H1 (cell line): ENCODE measurements at regions of chr16 and their contacts with region 1.

Region 1: GRCh38 chr16:799948-800833 is at the start of gene GNG13:
- DNase-seq: peak in 1 of 2 experiments; percentile 84
- H3K4me3 ChIP-seq: peak within 1 kb of the TSS; percentile 5 to 61 (median 20); a peak in 6 of 8 replicates
- H3K27ac ChIP-seq: no peak within 1 kb of the TSS
- H3K4me1 ChIP-seq: peaks cover 0 to 17% (median 3%) of the 10 kb centered on the region in 4 experiments; a peak in 4 of 7 replicates
- H3K27me3 ChIP-seq: peaks cover 1 to 42% (median 28%) of the 10 kb centered on the region in 4 experiments; a peak in 6 of 7 replicates
- CTCF ChIP-seq: no peak
- EP300 ChIP-seq: no peak
- POLR2A ChIP-seq: no peak
- RAD21 ChIP-seq: no peak
- total RNA-seq, gene GNG13: not detected in 2 replicates

Region 2: DNA sequence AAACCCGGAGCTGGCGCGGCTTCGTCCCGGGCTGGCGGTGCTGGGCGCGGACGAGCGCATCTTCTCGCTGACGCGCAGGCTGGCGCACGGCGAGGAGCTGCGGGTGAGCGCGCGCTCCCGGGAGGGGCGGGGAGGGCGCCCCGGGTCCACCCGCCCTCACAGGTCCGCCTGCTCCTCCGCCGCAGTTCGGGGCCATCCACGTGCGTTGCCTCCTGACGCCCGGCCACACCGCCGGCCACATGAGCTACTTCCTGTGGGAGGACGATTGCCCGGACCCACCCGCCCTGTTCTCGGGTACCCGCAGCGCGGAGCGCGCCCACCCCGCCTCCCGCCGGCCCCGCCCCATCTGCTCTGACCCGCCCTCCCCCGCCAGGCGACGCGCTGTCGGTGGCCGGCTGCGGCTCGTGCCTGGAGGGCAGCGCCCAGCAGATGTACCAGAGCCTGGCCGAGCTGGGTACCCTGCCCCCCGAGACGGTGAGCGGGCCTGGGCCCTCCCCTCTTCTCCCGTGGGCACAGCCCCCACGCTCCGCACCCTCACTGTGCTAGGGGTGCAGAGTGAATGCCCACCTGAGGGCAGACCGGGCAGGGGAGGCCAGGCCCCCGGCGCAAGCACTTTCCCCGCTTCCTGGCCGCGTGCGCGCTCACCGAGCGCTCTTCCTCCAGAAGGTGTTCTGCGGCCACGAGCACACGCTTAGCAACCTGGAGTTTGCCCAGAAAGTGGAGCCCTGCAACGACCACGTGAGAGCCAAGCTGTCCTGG is 71.9 kb before region 1 on chr16:
- CTCF ChIA-PET with region 1: interaction called, 3 read pairs
- POLR2A ChIA-PET with region 1: interaction called, 14 read pairs
- DNase-seq: no peak
- H3K4me3 ChIP-seq: peak overlapping the region; percentile 24 to 83 (median 37)
- H3K27ac ChIP-seq: no peak overlapping the region; the same call in 1 of the 2 replicates
- H3K4me1 ChIP-seq: peaks cover 0 to 14% (median 8%) of the 10 kb centered on the region in 4 experiments; a peak in 5 of 7 replicates
- H3K27me3 ChIP-seq: peaks cover 0 to 16% (median 5%) of the 10 kb centered on the region in 4 experiments; a peak in 4 of 7 replicates
- CTCF ChIP-seq: no peak
- EP300 ChIP-seq: no peak
- POLR2A ChIP-seq: 0 out of 3 replicates have a peak, but pooled peaks of 1 of the 2 experiments have one; percentile 15
- RAD21 ChIP-seq: no peak

Region 3: GRCh38 chr16:782766-783403 is 17.3 kb before region 1 on chr16:
- CTCF ChIA-PET with region 1: interaction called, 24 read pairs
- POLR2A ChIA-PET with region 1: interaction called, 20 read pairs
- DNase-seq: no peak
- H3K4me3 ChIP-seq: no peak overlapping the region
- H3K27ac ChIP-seq: no peak overlapping the region
- H3K4me1 ChIP-seq: peaks cover 0 to 12% (median 2%) of the 10 kb centered on the region in 4 experiments; a peak in 3 of 7 replicates
- H3K27me3 ChIP-seq: peaks cover 0 to 3% (median under 1%) of the 10 kb centered on the region in 4 experiments; a peak in 3 of 7 replicates
- CTCF ChIP-seq: no peak
- EP300 ChIP-seq: no peak
- POLR2A ChIP-seq: 0 out of 3 replicates have a peak, but pooled peaks of 1 of the 2 experiments have one; percentile 9
- RAD21 ChIP-seq: no peak